ENCODE measurements at regions of chr9 and their contacts with region 1.

Region 1: DNA sequence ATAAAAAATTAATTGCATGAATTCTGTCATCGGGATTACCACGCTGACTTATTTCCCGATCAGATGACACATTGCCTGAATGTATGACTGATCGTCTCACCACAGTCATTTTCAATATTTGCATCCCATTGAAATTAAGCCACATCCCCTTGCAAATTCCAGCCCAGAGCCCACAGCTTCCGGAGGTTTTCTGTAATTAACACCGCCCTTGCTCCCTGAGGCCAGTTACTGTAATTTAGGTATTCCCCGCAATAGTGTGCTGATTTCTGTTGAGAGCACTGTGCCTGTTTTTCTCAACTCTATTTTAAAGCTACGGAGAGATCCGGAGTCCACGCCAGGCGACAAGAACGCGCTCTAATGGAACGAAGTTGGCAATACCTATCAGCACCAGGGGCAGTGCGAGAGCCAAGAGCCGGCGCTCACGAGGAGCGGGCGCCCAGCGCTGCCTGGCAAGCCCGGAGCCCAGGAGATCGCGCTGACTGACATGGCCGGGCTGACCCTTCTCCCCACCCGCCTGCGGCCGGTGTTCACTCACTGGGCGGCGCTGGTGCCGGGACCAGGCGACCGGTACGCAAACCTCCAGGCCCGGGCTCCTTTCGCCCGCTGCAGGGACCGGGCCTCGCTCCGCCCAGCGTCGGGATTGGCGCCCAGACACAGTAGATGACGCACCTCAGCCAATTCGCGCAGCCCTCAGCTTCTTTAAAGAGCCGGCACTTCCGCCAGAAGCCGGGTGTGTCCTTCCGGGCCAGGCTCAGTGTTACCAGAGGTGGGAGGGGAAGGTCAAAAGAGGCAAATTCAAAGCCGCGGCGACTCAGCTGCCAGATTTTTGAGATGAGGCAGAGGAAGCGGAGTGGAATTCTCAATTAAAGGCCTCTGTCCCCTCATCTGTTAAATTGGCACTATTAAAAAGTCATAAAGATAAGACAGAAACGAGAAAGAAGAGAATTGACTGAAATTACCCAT is at the start of gene PLGRKT:
- DNase-seq: peak; percentile 97
- H3K4me3 ChIP-seq: peak within 1 kb of the TSS; percentile 75
- H3K27ac ChIP-seq: peak within 1 kb of the TSS; percentile 90
- H3K4me1 ChIP-seq: peaks cover 41% of the 10 kb centered on the region
- CTCF ChIP-seq: peak; percentile 54
- total RNA-seq, gene PLGRKT: 7.9 and 10.4 TPM in 2 replicates

Region 2: DNA sequence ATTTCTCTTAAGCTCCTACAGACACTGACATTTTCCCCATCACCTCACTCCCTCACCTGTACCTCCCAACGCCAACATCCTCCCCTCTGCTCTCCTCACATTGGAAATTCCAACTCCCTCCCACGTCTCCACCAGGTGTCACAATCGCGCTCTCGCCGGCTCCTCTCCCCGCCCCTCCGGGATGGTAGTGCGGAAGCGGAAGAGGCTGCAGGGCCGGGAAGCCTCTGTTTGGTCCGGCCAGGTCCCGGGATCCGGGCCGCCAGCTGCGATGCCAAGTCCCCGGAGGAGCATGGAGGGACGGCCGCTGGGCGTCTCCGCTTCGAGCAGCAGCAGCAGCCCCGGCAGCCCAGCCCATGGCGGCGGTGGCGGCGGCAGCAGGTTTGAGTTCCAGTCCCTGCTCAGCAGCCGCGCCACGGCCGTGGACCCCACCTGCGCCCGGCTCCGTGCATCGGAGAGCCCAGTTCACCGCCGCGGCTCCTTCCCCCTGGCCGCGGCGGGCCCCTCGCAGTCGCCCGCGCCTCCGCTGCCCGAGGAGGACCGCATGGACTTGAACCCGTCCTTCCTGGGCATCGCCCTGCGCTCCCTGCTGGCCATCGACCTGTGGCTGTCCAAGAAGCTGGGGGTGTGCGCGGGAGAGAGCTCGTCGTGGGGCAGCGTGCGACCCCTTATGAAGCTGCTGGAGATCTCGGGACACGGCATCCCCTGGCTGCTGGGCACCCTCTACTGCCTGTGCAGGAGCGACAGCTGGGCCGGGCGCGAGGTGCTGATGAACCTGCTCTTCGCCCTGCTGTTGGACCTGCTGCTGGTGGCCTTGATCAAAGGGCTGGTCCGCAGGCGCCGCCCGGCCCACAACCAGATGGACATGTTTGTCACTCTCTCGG is 775.2 kb before region 1 on chr9 and contains the start of gene PLPP6:
- CTCF ChIA-PET with region 1: no interaction called
- POLR2A ChIA-PET with region 1: interaction called, 3 read pairs
- intact Hi-C with region 1: loop called (anchors 5 kb)
- DNase-seq: peak; percentile 75
- H3K4me3 ChIP-seq: peak within 1 kb of the TSS; percentile 77
- H3K27ac ChIP-seq: no peak within 1 kb of the TSS
- H3K4me1 ChIP-seq: peaks cover 23% of the 10 kb centered on the region
- CTCF ChIP-seq: peak; percentile 66
- total RNA-seq, gene PLPP6: 2.5 and 4.6 TPM in 2 replicates

Region 3: DNA sequence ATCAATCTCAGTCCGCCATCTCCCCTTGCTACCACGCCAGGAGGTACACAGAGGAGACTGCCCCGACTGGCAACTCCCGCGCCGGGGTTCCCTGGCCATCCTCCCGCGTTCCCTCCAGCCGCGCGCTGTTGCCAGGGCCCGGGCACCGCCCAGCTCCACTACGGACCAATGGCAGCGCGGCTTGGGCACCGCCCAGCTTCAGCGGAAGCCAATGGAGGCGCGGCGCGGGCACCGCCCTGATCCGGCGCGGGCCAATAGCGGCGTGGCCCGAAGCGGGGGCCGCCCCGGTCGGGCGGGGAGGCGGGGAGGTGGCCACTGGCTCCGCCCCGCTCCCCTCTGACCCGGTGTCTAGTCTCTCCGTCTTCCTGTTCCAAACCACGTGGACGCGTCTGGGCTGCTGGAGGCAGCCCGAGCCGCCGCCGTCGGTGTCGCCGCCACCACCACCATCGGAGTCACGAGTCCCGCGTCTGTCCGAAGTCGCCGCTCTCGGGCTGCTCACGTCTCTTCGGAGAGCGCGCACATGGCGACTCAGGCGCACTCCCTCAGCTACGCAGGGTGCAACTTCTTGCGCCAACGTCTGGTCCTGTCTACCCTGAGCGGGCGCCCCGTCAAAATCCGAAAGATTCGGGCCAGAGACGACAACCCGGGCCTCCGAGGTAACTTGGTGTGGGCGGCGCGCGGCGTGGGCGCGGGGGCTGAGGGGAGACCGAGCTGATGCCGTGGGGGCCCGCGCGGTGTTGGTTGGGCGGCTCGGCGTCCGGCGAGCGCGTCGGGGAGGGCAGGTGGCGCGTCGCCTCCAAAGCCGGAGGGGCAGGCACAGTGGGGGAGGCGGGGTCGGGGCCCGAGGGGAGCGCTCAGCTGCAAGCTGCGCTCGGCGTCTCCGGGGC is 644.7 kb before region 1 on chr9 and contains the start of gene RCL1:
- CTCF ChIA-PET with region 1: no interaction called
- POLR2A ChIA-PET with region 1: no interaction called
- intact Hi-C with region 1: loop called (anchors 5 kb)
- DNase-seq: peak; percentile 97
- H3K4me3 ChIP-seq: peak within 1 kb of the TSS; percentile 80
- H3K27ac ChIP-seq: peak within 1 kb of the TSS; percentile 45
- H3K4me1 ChIP-seq: peaks cover 27% of the 10 kb centered on the region
- CTCF ChIP-seq: no peak
- total RNA-seq, gene RCL1: 25.0 and 27.5 TPM in 2 replicates

Region 4: DNA sequence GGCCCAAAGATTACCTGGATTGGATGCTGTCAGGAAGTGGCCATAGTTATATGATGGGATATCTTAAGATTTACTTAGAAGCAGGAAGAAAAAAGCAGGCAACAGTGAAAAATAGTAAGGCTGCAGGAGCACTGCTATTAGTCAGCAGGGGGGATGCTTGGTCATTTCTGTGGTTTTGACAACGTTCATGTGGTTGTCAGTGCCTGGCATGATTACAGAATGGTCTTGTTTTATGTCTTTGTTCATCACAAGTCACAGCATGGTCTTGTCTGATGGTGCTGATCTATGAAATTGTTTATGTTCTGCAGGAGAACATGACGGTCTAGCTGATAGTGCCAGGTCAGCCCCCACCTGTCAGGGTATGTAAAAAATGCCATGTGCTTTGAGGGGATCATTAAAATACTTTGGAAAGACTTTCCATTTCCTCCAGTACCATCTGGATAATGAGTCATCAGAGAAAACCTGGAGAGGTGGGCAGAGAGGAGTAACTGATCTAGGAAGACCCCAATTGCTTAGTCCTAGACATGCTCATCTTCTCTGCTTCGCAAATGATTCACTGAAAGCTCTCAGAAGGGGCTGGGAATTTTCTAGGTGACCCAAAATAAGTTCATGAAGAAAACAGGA is 48.3 kb before region 1 on chr9:
- CTCF ChIA-PET with region 1: no interaction called
- POLR2A ChIA-PET with region 1: no interaction called
- intact Hi-C with region 1: no loop called
- DNase-seq: no peak
- H3K4me3 ChIP-seq: no peak overlapping the region
- H3K27ac ChIP-seq: no peak overlapping the region
- H3K4me1 ChIP-seq: no peaks in the 10 kb centered on the region
- CTCF ChIP-seq: no peak

Region 5: GRCh38 chr9:5450359-5451091 is 13.0 kb after region 1 on chr9 and contains the start of gene CD274:
- CTCF ChIA-PET with region 1: interaction called, 6 read pairs
- POLR2A ChIA-PET with region 1: interaction called, 17 read pairs
- intact Hi-C with region 1: no loop called
- DNase-seq: peak; percentile 74
- H3K4me3 ChIP-seq: peak within 1 kb of the TSS; percentile 71
- H3K27ac ChIP-seq: no peak within 1 kb of the TSS
- H3K4me1 ChIP-seq: peaks cover 25% of the 10 kb centered on the region
- CTCF ChIP-seq: peak; percentile 81
- total RNA-seq, gene CD274: 0.57 and 4.3 TPM in 2 replicates

Region 6: DNA sequence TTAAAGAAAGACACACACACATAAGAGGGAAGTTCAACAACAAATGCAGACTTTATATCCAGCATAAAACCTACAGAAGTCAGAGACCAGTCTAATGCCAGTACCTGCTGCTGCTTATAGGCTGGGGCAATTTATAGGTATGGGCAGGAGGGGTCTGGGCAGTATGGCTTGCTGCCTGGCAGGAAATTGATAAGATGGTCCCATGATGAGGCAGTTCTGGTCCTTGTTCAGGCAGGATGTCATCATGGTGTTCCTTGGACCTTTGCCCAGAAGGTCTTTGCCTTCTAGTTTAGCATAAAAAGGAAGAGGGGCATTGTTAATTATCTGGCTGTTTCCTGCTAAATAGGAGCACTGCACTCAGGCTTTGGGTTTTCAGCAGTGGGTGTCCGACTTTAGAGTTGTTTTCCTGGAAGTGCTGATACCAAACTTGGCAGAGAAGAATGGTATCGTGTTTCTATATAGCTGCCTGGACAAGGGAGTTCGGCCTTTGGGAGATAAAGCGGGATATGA is 62.4 kb after region 1 on chr9:
- CTCF ChIA-PET with region 1: no interaction called
- POLR2A ChIA-PET with region 1: no interaction called
- intact Hi-C with region 1: no loop called
- DNase-seq: no peak
- H3K4me3 ChIP-seq: no peak overlapping the region
- H3K27ac ChIP-seq: no peak overlapping the region
- H3K4me1 ChIP-seq: no peaks in the 10 kb centered on the region
- CTCF ChIP-seq: no peak

Region 7: DNA sequence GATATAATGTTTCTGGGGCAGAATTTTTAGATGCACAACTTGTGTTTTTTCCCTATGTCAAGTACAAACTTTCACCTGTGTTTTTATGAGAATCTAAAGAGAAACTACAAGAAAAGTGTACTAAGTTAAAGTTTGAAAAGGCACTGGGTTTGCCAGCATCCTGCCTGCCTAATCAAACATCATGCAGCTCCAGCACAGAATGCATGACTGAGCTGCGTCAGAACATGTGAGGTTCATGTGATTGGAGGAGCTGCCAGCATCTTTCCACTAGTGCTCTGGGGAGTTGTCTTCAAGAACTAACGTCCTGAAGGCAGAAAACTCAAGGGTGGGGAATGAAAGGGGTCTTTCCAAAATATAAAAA is 145.3 kb after region 1 on chr9:
- CTCF ChIA-PET with region 1: interaction called, 4 read pairs
- POLR2A ChIA-PET with region 1: interaction called, 36 read pairs
- intact Hi-C with region 1: no loop called
- DNase-seq: peak; percentile 63
- H3K4me3 ChIP-seq: no peak overlapping the region
- H3K27ac ChIP-seq: no peak overlapping the region
- H3K4me1 ChIP-seq: peaks cover 33% of the 10 kb centered on the region
- CTCF ChIP-seq: no peak

Region 8: DNA sequence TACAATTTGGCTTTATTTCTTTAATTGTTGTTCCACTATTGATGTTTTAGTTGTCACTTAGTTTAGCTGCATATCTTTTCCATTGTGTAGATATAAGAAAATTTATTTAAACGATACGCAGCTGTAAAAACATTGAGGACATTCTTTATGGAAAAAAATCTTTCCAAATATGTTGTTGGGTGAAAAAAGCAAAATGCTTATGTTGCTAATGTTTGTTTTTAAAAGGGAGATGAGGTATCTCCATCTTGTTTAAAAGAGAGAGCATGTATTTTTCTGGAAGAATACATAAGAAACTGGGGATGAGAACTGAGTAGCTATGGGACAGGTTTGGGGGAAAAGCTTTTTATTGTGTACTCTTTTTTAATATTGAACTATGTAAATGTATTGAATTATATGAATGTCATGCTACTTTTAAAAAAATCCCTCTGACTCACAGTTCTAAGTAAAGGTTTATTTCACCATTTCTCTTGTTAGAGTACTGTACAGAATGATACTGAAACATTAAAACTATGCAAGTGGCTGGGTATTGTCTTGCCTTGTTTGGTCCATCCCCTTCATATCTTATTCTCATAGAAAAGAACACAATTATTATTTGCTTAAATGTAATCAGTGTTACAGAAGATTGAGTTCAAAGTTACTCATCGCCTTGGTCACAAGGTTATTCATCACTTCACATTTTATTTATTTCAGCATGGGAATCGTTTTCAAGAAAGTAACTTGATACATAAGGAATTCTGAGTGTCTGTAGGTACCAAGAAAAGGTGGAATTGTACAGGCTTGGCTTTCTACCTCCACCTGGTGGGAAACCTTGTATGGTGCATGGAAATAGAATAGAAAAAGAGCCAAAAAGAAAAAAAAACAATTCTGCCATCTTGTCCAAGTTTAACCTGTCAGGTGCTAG is 277.2 kb after region 1 on chr9:
- CTCF ChIA-PET with region 1: no interaction called
- POLR2A ChIA-PET with region 1: no interaction called
- intact Hi-C with region 1: loop called (anchors 5 kb)
- DNase-seq: peak; percentile 26
- H3K4me3 ChIP-seq: no peak overlapping the region
- H3K27ac ChIP-seq: no peak overlapping the region
- H3K4me1 ChIP-seq: no peaks in the 10 kb centered on the region
- CTCF ChIP-seq: peak; percentile 79

Region 9: DNA sequence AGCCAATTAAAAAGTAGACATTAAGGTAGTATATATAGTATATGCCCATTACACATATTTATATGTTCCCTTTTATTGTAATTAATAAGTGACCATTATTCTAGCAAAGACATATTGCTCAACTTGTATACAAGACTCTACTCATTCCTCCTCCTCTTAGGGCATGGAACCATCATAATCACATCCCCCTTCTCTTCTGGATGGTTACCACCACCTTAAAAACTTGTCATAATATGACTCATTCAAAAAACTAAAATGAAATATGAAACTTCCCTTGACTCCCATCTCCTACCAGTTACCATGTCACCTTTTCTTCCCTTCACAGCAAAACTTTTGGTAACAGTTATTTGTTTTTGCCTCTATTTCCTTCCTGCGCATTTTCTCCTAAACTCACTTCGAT is 1758.9 kb after region 1 on chr9:
- CTCF ChIA-PET with region 1: no interaction called
- POLR2A ChIA-PET with region 1: interaction called, 13 read pairs
- intact Hi-C with region 1: no loop called
- DNase-seq: no peak
- H3K4me3 ChIP-seq: no peak overlapping the region
- H3K27ac ChIP-seq: no peak overlapping the region
- H3K4me1 ChIP-seq: no peaks in the 10 kb centered on the region
- CTCF ChIP-seq: no peak